ENCODE measurements at regions of chr14 and their contacts with region 1.

Region 1: DNA sequence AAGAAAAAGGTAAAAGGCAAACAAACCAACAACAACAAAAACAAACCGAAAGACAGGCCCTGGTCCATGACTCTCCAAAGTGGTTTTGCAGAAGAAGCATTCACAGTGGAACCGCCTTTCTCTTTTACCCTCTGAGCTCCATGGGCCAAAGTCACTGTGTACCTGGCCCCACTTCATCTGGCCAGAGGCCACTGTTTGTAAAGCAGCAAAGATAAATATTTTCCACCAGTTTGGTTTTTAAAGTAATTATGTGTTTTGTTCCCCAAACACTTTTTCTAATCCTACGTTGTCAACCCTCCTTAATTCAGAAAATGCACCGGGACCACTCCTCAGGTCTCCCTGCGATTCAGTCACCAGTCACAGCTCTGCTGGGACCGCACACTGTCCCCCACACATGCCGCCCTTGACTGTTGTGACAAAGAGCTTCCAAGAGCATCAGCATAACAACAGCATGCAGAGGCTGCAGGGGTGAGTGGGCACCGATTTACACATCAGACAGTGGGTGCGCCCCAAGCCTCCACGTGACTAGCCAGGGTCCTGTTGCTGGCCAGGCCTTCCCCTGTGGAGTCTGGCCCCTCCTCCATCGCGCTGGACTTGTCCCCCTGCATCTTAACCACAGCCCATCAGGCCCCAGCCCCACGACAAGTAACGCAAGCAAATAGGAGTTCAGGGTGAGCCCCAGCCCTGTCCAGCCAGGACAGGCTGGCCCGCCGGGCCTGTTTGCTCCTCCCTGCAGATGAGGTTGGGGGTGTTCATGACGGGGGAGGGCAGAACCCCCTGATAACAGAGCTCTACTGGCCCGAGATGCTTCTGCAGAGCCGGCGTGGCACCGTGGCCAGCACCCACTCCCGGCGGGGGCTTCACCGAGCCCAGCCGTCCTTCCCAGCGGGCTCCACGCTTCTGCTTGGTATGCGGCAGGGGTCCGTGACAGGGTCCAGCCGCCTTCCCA is 65.2 kb upstream of the DIO3 start:
- DNase-seq: peak; percentile 19 to 62
- H3K4me3 ChIP-seq: peak overlapping the region in 2 of 4 experiments; percentile 19 to 30; a peak in 4 of 8 replicates
- H3K27ac ChIP-seq: no peak overlapping the region
- H3K4me1 ChIP-seq: peaks cover 10 to 21% (median 15%) of the 10 kb centered on the region in 4 experiments
- H3K27me3 ChIP-seq: no peaks in the 10 kb centered on the region; a peak in 1 of 7 replicates
- CTCF ChIP-seq: no peak
- EP300 ChIP-seq: no peak
- POLR2A ChIP-seq: no peak
- RAD21 ChIP-seq: no peak

Region 2: DNA sequence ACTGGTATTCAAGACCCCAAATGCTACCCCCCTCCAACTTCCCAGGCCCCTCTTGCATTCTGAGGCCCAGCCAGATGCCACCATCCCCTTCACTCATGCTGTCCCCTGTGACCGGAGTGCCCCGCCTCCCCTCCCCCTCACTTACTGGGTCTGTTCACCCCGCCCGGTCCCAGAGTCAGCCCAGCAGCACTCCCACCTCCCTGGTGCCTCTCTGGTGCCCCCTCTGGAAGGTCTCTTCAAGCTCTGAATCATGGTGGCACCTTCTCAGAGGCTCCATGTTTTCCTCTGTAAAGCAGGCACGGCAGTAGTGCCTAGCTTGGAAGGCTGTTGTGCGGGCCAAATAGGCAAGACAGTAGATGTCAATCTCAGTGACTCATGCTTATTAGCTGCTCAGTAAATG is 18.7 kb after region 1 on chr14:
- CTCF ChIA-PET with region 1: interaction called, 12 read pairs
- POLR2A ChIA-PET with region 1: no interaction called
- DNase-seq: no peak
- H3K4me3 ChIP-seq: no peak overlapping the region
- H3K27ac ChIP-seq: no peak overlapping the region
- H3K4me1 ChIP-seq: no peaks in the 10 kb centered on the region; a peak in 1 of 7 replicates
- H3K27me3 ChIP-seq: no peaks in the 10 kb centered on the region
- CTCF ChIP-seq: peak in 1 of 3 experiments; percentile 12; a peak in 1 of 4 replicates
- EP300 ChIP-seq: no peak
- POLR2A ChIP-seq: no peak
- RAD21 ChIP-seq: no peak

Measured in H1 (cell line).